Ascending aorta (tissue), 2 donors: ENCODE measurements at regions of chr5 and their contacts with region 1.

Region 1: DNA sequence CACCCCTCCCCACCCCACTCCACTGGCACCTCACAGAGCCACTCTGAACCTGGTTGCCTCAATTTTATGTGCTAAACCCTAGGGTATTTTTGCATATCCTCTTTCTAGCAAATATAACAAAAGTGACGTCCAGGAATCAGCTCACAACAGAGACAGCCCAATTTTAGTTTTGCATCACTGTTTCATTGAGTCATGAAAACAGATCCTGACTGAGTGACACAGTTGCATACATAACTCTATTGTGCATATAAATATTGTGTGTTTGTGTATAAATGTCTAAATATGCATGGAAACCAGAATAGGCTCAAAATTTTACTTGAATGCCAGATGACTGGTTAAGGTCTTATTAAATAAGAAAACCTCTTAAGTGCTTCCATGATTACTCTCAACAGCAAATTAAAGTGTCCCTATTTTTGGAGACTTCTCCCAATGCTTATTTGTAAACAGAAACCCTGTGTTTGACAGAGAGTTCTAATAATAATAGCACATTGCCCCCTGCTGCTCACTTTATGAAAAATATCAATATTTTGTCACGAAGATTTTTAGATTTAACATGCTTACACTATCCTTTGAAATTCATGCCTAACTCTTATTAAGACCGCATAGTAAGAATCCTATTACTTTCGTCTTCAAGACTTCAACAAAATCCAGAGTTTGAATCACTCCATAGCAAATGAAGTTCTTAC is 75.5 kb upstream of the PRRC1 start:
- DNase-seq: no peak
- H3K4me3 ChIP-seq: no peak overlapping the region
- H3K27ac ChIP-seq: no peak overlapping the region
- H3K4me1 ChIP-seq: no peaks in the 10 kb centered on the region
- H3K27me3 ChIP-seq: no peaks in the 10 kb centered on the region
- CTCF ChIP-seq: no peak

Region 2: DNA sequence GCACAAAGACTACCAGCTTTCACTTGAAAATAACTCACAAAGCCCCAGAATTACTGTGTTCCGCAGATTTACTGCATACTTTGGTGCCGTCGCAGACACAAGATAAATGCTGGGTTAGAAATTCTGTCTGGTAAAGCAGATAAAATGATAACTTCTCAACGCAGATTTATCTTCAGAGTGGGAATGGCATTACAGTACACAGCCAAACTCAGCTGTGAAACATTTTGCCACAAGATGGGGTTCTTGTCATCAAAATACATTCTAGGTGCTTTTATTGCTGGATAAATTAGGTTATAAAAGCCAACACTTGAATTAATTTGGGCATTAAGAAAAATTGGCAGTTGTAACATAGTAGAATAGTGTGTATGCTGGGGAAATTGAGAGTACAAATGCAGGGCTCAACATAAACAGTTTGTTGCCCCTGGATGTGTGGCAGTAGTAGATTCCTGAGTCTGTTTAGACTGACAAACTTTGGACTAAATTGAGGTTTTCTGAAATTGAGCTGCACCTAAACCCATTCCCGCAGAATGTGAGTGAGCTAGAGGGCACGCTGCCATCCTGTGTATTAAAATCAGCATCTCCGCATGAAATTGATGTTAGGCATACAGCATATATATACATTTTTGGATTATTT is 603.9 kb before region 1 on chr5:
- intact Hi-C with region 1: loop called (anchors 5 kb)
- DNase-seq: no peak
- H3K4me3 ChIP-seq: no peak overlapping the region
- H3K27ac ChIP-seq: no peak overlapping the region
- H3K4me1 ChIP-seq: no peaks in the 10 kb centered on the region
- H3K27me3 ChIP-seq: no peaks in the 10 kb centered on the region
- CTCF ChIP-seq: peak; percentile 18 to 54 (median 28)

Region 3: GRCh38 chr5:127290019-127290945 is 151.7 kb before region 1 on chr5 and contains the start of gene MEGF10:
- intact Hi-C with region 1: loop called (anchors 2 kb)
- DNase-seq: no peak
- H3K4me3 ChIP-seq: peak within 1 kb of the TSS in 1 of 2 donors; percentile 15
- H3K27ac ChIP-seq: no peak within 1 kb of the TSS
- H3K4me1 ChIP-seq: no peaks in the 10 kb centered on the region
- H3K27me3 ChIP-seq: no peaks in the 10 kb centered on the region
- CTCF ChIP-seq: peak in 1 of 3 experiments; percentile 20
- total RNA-seq, gene MEGF10: 0.11 TPM

Region 4: DNA sequence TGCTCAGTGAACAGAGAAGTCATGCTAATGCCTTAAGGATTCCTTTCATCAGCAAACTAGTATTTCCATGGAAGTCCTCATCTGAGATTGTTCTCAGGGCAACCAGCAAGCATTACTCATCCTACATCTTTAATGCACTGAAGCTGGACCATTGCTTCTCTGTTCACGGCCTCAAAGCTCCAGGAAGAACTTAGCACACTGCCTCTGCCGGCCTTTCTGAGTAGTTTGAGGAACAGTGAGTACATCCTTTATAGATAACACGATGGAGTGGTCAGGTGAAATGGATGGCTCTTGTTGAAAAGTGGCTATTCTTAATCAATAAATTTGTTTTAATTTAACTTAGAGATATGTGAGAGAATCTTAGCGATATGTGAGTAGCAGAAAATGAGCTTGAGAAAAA is 115.5 kb before region 1 on chr5:
- intact Hi-C with region 1: no loop called
- DNase-seq: no peak
- H3K4me3 ChIP-seq: no peak overlapping the region
- H3K27ac ChIP-seq: no peak overlapping the region
- H3K4me1 ChIP-seq: no peaks in the 10 kb centered on the region
- H3K27me3 ChIP-seq: no peaks in the 10 kb centered on the region
- CTCF ChIP-seq: no peak